Head of caudate nucleus (tissue), 42 donors: ENCODE measurements at regions of chrX and their contacts with region 1.

Region 1: GRCh38 chrX:39652336-39653131 is 445.2 kb downstream of the BCOR start:
- DNase-seq: peak in 32 of 42 donors; percentile 5 to 81 (median 44)

Region 2: GRCh38 chrX:39677978-39678791 is 25.7 kb after region 1 on chrX:
- intact Hi-C with region 1: loop called (anchors 1 kb)
- DNase-seq: peak; percentile 69 to 91 (median 82)